CD8-positive, alpha-beta memory T cell (primary cell): ENCODE measurements at regions of chr5 and their contacts with region 1.

Region 1: DNA sequence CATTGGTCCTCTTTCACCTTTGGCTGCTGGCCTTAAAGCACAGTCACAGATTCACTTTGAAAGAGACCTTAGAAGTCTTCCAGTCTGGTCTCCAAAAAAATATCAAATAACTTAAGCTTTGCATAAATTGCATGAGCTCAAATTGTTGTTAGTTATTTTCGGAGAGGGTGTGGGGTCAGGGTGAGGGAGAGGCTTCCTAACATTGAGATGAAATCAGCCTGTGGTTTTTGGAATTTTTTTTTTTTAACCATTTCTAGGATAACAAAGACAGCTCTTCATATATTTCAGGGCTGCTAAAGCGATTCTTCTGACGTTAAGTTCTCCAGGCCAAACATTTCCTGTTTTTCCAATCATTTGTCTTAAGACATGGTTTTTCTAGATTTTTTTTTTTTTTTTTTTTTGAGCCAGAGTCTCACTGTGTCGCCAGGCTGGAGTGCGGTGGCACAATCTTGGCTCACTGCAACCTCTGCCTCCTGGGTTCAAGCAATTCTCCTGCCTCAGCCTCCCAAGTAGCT is 4.5 kb downstream of the OCLN start:
- DNase-seq: no peak
- H3K4me3 ChIP-seq: no peak overlapping the region
- H3K4me3 Mint-ChIP-seq: no peak overlapping the region
- H3K27ac ChIP-seq: no peak overlapping the region
- H3K27ac Mint-ChIP-seq: no peak overlapping the region
- H3K4me1 ChIP-seq: no peaks in the 10 kb centered on the region
- H3K4me1 Mint-ChIP-seq: peaks cover 0 to 19% (median 4%) of the 10 kb centered on the region in 3 donors
- H3K27me3 ChIP-seq: peaks cover 10% of the 10 kb centered on the region
- H3K27me3 Mint-ChIP-seq: peaks cover 34 to 50% of the 10 kb centered on the region in 2 donors

Region 2: DNA sequence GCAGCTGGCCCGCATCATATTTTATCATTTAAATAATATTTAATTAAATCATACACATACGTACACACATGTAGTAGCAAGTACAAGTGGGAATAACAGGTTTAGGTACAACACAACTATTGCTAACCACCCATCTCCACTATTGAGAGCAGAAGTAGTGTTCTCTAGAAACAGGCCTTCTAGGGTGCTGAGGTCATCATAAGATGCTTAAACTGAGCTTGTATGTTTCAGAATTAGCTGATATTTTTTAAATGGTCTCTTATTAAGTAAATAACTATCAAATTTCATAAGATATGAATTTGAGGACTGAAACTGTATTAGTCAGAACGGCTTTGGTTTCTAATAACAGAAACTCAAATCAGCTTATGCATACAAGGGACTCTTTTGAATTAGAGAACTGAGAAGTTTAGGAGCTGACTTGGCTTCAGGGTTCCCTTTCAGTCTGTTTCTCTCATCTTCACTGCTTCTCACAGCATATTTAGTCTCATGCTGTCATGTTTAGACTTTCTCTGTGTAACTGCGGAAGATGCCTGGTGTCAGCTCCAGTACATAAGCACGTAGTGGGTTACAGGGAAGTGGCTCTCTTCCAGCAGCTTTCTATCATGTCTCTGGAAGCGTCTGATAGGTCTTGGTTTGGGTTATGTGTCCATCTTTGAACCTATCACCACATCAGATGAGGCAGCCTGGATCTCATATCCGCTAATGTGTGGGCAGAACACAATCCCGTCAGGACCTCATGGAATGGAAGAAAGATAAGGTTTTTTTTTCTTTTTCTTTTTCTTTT is 29.4 kb before region 1 on chr5:
- CTCF ChIA-PET with region 1: no interaction called
- POLR2A ChIA-PET with region 1: interaction called, 14 read pairs
- DNase-seq: no peak
- H3K4me3 ChIP-seq: no peak overlapping the region
- H3K4me3 Mint-ChIP-seq: no peak overlapping the region
- H3K27ac ChIP-seq: no peak overlapping the region
- H3K27ac Mint-ChIP-seq: no peak overlapping the region
- H3K4me1 ChIP-seq: no peaks in the 10 kb centered on the region
- H3K4me1 Mint-ChIP-seq: no peaks in the 10 kb centered on the region
- H3K27me3 ChIP-seq: no peaks in the 10 kb centered on the region
- H3K27me3 Mint-ChIP-seq: no peaks in the 10 kb centered on the region